ENCODE measurements at regions of chr12 and their contacts with region 1.

Region 1: GRCh38 chr12:54279866-54280467 is at the start of gene CBX5:
- DNase-seq: peak; percentile 99
- H3K4me3 Mint-ChIP-seq: no peak within 1 kb of the TSS
- H3K27ac Mint-ChIP-seq: no peak within 1 kb of the TSS
- H3K4me1 Mint-ChIP-seq: peaks cover 59% of the 10 kb centered on the region
- H3K27me3 Mint-ChIP-seq: no peaks in the 10 kb centered on the region
- total RNA-seq, gene CBX5: 99.8 and 106 TPM in 2 replicates

Region 2: GRCh38 chr12:54191550-54192022 is 88.4 kb before region 1 on chr12:
- intact Hi-C with region 1: loop called (anchors 1 kb)
- DNase-seq: peak; percentile 64
- H3K4me3 Mint-ChIP-seq: no peak overlapping the region
- H3K27ac Mint-ChIP-seq: no peak overlapping the region
- H3K4me1 Mint-ChIP-seq: peaks cover 32% of the 10 kb centered on the region
- H3K27me3 Mint-ChIP-seq: peaks cover 43% of the 10 kb centered on the region

Region 3: DNA sequence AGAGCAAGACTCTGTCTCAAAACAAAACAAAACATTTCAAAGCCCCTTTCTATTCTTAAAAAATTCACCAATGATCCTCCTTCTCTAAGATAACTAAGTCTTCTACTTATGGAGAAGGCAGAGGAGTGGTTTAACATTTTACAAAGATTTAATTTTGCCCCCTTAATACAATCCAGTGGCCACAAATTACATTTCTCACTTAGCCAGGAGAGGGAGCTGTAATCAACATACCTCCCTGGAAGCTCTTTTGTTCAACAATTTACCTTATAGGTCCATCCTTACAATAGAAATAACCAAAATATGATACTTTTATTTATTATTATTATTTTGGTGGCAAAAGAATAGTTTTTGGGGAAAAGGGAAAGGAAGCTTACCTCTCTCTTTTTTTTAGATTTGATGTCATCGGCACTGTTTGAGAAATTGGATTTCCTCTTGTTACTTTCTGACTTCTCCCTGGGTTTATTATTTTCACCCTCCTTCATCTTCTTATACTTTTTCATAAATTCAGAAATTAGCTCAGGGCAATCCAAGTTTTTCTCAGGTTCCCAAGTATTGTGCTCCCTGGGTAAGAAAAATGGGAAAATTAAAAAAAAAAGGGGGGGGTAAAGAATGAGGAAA is 28.2 kb before region 1 on chr12:
- intact Hi-C with region 1: loop called (anchors 1 kb)
- DNase-seq: no peak
- H3K4me3 Mint-ChIP-seq: no peak overlapping the region
- H3K27ac Mint-ChIP-seq: no peak overlapping the region
- H3K4me1 Mint-ChIP-seq: peaks cover 6% of the 10 kb centered on the region
- H3K27me3 Mint-ChIP-seq: no peaks in the 10 kb centered on the region

Region 4: DNA sequence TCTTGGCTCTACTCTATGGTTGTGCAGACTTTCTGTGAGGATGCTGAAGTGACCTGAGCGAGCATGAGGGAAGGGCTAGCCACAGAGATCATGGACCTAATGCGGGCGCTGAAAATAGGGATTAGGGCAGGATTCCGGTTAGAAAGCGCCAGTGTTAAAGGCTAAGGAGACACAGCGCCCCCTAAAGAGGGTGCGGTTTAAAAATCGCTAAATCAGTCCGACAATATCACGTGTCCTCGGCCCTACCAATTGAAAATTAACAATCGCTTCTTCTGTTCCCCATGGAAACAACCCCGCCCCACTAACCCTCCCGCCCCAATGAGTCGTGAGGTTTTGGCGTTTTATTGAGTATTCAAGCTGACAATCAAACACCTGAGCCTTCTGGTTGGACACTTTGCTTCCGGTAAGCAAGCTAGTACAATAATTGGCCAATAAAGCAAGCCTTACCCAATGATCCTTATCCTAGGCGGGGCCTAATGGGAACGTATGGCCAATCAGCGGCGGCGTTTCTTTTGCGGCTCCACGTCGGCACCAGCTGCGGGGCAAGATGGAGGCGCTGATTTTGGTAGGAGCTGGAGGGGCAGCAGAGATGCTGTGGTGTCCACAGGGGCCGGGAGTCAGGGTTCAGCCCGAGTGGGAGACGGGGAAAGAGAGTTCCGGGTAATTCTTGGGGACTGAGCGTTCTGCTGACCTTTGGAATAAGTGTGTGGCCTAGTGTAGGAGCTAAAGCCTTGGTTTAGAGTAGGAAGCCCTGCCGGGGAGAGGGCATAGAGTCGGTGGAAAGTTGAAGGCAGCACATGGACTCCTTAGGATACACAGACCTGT is 44.9 kb after region 1 on chr12 and contains the start of gene COPZ1:
- intact Hi-C with region 1: loop called (anchors 1 kb)
- DNase-seq: peak; percentile 91
- H3K4me3 Mint-ChIP-seq: peak within 1 kb of the TSS; percentile 99
- H3K27ac Mint-ChIP-seq: peak within 1 kb of the TSS; percentile 86
- H3K4me1 Mint-ChIP-seq: peaks cover 33% of the 10 kb centered on the region
- H3K27me3 Mint-ChIP-seq: peaks cover 5% of the 10 kb centered on the region
- total RNA-seq, gene COPZ1: 115 and 123 TPM in 2 replicates

Region 5: DNA sequence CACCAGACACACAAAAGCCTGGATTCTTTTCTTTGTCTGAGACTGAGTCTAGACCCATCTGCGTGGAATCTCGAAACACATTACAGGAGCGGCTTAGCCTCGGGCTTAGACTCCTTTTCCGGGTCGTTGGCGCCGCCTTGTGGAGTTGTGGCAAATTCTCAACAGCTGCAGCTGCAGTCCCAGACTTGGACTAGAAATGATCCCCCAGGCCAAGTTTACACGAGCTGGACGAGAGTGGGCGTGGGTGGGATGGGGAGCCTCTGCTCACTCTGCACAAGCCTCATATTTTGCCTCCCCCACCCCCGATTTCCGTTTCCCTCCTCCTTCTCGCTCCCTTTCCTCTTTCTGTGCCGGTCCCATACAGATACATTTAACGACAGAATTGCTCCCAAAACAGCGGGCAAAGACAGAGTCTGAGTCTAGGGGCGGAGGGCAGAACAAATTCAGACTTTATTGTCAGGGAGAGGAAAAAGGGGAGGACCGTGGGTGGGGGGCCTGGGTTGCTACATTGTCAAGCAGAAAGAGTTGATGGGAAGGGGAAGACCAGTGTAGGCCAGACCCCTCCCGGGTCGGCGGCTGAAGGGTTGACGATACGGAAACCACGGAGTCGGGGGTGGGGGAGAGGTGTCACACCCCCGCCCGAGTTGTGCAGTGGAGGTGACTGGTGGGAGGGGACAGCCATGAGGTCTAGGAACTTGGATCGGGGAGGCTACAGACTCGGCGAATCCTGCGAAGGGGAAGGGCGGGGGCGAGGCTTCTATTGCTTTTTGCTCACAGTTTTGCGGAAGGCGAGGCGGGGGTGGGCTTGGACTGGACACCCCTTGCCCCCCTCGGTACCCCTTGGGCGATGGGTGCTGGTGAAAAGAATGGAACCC is 89.0 kb after region 1 on chr12:
- intact Hi-C with region 1: loop called (anchors 1 kb)
- DNase-seq: peak; percentile 76
- H3K4me3 Mint-ChIP-seq: peak overlapping the region; percentile 65
- H3K27ac Mint-ChIP-seq: peak overlapping the region; percentile 61
- H3K4me1 Mint-ChIP-seq: peaks cover 43% of the 10 kb centered on the region
- H3K27me3 Mint-ChIP-seq: peaks cover 12% of the 10 kb centered on the region

Region 6: DNA sequence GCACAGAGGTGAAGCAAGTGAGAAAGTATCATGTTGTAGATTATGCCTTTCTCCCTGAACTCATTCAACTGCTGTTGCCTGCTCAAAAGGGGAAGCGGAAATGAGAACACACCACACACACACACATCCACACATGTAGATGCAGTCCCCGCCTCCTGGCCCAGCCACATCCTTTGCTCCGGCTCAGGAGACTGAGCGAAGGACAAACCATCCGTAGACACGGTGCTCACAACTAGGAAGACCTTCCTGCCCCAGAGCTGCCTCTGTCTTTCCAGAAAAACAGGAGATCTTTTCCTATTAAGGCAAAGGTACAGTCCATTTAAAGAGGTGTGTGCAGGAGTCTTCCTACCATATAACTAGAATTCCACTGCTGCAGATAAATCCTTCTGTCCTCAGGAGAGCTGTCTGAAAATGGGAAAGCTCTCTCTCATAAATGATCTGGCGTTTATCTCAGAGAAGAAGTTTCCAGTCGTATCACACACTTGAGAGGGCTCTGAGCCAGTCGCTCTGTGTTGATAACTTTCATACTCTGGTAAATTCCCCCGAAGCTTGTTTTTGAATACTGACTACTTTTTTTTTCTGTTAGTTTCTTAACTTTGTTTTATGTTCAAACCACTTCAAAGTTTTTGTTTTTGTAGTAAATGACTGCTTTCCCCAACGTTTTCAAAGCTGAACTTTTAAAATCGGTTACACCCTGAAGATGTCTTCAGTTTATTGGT is 704.9 kb after region 1 on chr12 and contains the start of gene TESPA1:
- intact Hi-C with region 1: loop called (anchors 5 kb)
- DNase-seq: peak; percentile 82
- H3K4me3 Mint-ChIP-seq: peak within 1 kb of the TSS; percentile 90
- H3K27ac Mint-ChIP-seq: peak within 1 kb of the TSS; percentile 90
- H3K4me1 Mint-ChIP-seq: peaks cover 79% of the 10 kb centered on the region
- H3K27me3 Mint-ChIP-seq: no peaks in the 10 kb centered on the region
- total RNA-seq, gene TESPA1: 179 and 181 TPM in 2 replicates

Measured in activated T-helper 1 cell treated with anti-CD3 and anti-CD28 coated beads, Interleukin-12 subunit alpha, Interleukin-12 subunit beta, Interleukin-2, Interleukin-4 antibody, amounts not matched to agents 30 ng/mL and 10 ng/mL and 1 ng/mL, durations not matched to agents 14 hours and 24 hours and 36 hours (primary cell).